ENCODE measurements at regions of chr5 and their contacts with region 1.

Region 1: GRCh38 chr5:90381211-90381929 is 28.2 kb downstream of the CETN3 start:
- DNase-seq: no peak

Region 2: GRCh38 chr5:88724201-88724600 is 1657.2 kb before region 1 on chr5:
- intact Hi-C with region 1: loop called (anchors 5 kb)
- DNase-seq: no peak

Region 3: GRCh38 chr5:89922161-89922560 is 459.2 kb before region 1 on chr5:
- intact Hi-C with region 1: no loop called
- DNase-seq: no peak

Region 4: GRCh38 chr5:90161414-90161813 is 220.0 kb before region 1 on chr5:
- intact Hi-C with region 1: no loop called
- DNase-seq: peak; percentile 77

Region 5: DNA sequence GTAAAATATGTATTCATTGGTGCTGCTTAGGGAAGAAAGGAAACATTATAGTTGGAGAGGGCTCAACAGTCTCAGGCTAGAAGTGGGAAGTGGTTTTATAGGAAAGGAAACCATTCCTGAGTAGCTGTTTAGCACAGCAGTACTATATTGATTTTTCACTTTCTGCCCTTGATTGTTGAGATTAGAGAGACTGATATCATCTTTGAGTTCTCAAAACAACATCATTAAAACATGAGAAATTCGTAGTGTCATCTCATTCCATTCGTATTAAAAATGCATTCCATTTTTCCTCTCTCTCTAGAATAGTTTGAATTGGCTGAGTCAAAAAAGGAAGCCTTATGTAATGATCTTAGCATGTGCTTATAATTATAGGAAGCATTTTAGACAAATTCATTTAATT is 107.4 kb after region 1 on chr5:
- intact Hi-C with region 1: no loop called
- DNase-seq: no peak

Measured in cardiac septum (tissue), 1 donor.